ENCODE measurements at regions of chrX and their contacts with region 1.

Region 1: DNA sequence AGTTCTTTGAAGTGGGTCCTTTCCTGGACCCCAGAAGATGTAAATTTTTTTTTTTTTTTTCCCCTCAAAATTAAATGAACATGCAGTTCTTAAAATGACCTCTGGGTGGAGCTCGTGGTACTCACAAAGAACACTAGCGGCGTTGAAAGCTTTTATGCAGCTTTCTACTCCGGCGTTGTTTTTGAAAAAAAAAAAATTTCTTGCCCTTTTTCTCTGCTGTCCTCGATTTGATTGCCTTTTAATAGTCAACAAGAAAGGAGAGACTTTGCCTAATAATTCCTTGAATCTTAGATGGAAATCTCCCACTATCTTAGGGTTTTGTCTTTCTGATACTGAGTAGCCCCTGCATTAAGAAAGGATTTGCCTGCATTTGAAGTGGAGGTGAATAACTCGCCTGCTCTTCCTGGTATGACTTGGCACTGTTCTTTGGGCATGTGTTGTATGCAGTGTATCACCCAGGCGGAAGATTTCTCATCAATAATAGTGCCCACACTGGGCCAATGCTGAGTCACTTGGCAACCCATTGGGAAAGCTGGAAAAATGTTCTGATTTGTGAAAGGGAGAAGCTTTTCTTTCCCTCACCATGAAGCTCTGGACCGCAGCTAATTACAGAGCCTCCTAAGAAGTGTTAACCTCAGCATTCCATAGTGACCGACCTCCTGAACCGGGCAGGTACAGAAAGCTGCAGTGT is 104.0 kb downstream of the PHEX start:
- DNase-seq: no peak
- ATAC-seq: peak; percentile 36

Region 2: GRCh38 chrX:22192417-22193060 is 56.4 kb after region 1 on chrX:
- intact Hi-C with region 1: loop called (anchors 10 kb)
- DNase-seq: peak; percentile 77
- ATAC-seq: peak; percentile 52

Region 3: DNA sequence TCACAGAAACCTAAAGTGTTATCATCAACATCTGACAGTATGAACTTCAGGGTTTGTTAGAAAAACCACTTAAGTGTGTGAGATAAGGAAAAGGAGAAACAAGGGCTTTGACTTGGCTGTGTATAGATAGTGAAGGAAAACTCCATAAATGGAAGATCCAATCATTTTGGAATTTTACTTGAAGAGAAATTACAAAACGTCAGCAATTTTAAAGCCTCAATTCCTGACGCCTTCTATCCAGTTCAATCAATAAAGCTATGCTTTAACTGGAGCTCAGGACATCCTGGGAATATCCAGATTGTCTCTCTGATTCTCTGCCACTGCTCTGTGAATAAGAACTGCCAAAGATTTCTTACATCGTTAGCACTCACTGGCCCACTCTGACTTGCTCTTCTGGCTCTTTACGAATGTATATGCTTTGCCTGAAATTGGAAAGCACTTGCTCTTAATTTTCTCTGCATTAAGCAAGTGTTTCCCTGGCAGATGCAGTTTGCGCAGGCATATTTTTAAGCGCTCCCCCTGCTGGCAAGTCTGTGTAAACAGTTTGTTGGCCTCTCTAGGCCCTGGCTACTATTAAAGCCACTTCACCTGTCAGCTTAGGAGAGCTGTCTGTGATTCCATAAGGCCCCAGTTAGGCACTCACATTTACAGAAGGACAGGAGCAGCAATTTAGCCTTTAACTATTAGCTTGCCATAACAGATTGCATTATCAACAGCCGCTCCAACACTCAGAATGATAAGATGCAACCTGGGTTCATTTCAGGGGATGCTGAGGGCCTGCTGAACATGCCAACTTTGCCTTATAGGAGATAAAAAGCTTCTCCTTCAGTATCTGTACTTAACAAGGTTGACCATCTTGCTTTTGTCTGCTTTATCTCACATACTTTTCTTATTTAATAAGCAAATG is 612.2 kb after region 1 on chrX:
- intact Hi-C with region 1: loop called (anchors 5 kb)
- DNase-seq: no peak
- ATAC-seq: peak; percentile 81

Region 4: GRCh38 chrX:23317799-23318724 is 1181.9 kb after region 1 on chrX:
- intact Hi-C with region 1: loop called (anchors 5 kb)
- DNase-seq: no peak
- ATAC-seq: peak; percentile 54

Measured in Right ventricle myocardium inferior (tissue), 1 donor.